ENCODE measurements at regions of chr7 and their contacts with region 1.

Region 1: DNA sequence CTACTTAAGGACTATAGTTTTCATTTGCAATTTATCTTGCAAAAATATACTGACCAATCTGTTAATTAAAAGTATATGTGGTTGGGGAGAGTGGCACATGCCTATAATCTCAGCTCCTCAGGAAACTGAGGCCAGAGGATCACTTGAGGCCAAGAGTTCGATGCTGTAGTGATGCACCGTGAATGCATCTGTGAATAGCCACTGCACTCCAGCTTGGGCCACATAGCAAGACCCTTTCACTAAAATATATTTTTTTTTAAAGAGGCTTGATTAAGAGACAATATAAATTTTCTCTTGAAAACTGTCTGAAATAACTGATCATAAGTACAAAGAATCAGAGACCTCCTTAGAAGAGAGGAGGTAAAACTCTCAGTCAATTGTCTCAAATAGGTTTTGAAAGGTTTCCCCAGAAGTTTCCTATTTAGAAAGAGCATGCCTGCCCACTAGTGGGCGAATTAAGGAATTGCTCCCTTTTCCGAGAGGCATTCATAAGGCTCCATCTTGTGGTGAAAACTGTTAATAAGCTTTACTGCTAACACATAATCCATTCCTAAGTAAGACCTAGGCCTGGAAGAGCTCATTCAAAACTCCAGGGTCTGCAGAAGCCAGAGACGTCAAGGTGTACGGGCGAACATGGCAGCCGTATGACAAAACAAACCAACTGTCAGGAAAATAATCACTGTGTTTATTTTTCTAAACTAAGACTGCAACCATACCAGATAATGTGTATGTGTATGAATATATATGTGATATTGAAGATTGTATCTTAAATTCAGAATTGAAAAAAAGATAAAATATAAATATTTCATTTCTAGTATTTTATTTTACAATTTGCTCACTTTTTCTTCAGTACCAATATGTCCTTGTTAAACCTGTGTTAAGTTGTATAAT is 6.8 kb upstream of the TAS2R40 start:
- DNase-seq: peak; percentile 64
- H3K4me3 ChIP-seq: no peak overlapping the region
- H3K27ac ChIP-seq: no peak overlapping the region
- H3K27me3 ChIP-seq: no peaks in the 10 kb centered on the region
- CTCF ChIP-seq: peak; percentile 99

Region 2: DNA sequence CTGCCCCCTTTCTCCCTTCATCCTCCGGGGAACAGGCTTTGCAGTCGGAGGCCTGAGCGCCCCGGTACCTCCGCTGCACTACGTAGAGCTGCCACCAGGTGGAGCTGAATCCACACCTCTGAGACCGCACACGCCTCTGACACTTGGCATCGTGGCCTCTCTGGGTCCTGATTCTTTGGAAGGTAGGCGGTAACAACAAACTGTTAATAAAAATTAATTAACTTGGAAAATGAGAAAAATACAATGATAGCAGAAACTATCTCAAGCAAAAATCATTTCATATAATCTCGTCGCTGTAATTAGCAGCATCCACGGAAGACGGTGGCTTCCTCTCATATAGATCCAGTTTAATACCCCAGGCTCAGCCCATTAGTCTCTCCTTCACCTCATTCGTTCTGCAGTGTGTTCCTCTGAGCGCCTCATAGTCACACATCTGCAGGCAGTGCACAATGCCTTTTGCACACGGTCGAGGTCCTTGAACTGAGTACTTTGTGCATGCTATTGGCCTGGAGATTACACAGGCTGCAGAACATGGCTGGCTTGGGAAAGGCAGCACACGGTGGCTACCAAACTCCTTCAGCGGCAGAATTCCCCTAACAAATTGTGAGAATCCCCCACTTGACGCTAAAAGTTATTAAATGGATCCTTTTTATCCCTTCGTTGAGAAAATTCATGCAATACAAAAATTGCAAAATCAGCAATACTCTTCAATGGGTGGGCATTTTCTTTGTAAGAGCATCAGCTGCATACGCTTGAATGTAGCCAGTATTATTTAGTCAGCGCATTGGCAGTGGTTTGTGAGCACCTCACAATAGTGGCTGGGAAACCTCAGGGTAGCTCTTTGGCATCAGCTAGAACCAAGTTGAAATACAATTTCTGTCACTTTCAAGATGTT is 206.8 kb before region 1 on chr7:
- in situ Hi-C with region 1: loop called (anchors 25 kb)
- DNase-seq: peak; percentile 67
- H3K4me3 ChIP-seq: no peak overlapping the region
- H3K27ac ChIP-seq: no peak overlapping the region
- H3K27me3 ChIP-seq: no peaks in the 10 kb centered on the region
- CTCF ChIP-seq: peak; percentile 97

Region 3: GRCh38 chr7:143299840-143300239 is 84.8 kb after region 1 on chr7:
- in situ Hi-C with region 1: no loop called
- DNase-seq: no peak
- H3K4me3 ChIP-seq: no peak overlapping the region
- H3K27ac ChIP-seq: no peak overlapping the region
- H3K27me3 ChIP-seq: no peaks in the 10 kb centered on the region
- CTCF ChIP-seq: peak; percentile 79

Measured in brain microvascular endothelial cell (primary cell).